CD8-positive, alpha-beta memory T cell (primary cell): ENCODE measurements at regions of chr11 and their contacts with region 1.

Region 1: GRCh38 chr11:64152841-64153691 is 12.8 kb downstream of the MACROD1 start:
- DNase-seq: peak; percentile 54 to 72 (median 62)
- H3K4me3 ChIP-seq: no peak overlapping the region
- H3K4me3 Mint-ChIP-seq: no peak overlapping the region
- H3K27ac ChIP-seq: no peak overlapping the region
- H3K27ac Mint-ChIP-seq: peak overlapping the region in 1 of 8 donors; percentile 51
- H3K4me1 ChIP-seq: no peaks in the 10 kb centered on the region
- H3K4me1 Mint-ChIP-seq: peaks cover 0 to 6% (median 2%) of the 10 kb centered on the region in 3 donors
- H3K27me3 ChIP-seq: no peaks in the 10 kb centered on the region
- H3K27me3 Mint-ChIP-seq: peaks cover 0 to 2% of the 10 kb centered on the region in 2 donors

Region 2: GRCh38 chr11:63768237-63769043 is 384.6 kb before region 1 on chr11 and contains the start of gene ZFTA:
- CTCF ChIA-PET with region 1: interaction called, 10 read pairs
- POLR2A ChIA-PET with region 1: no interaction called
- DNase-seq: peak; percentile 50 to 76 (median 63)
- H3K4me3 ChIP-seq: peak within 1 kb of the TSS; percentile 76
- H3K4me3 Mint-ChIP-seq: peak within 1 kb of the TSS; percentile 87 to 99 (median 95)
- H3K27ac ChIP-seq: peak within 1 kb of the TSS; percentile 64
- H3K27ac Mint-ChIP-seq: peak within 1 kb of the TSS in 7 of 8 donors; percentile 23 to 91 (median 83)
- H3K4me1 ChIP-seq: peaks cover 8% of the 10 kb centered on the region
- H3K4me1 Mint-ChIP-seq: peaks cover 8 to 17% (median 9%) of the 10 kb centered on the region in 3 donors
- H3K27me3 ChIP-seq: no peaks in the 10 kb centered on the region
- H3K27me3 Mint-ChIP-seq: peaks cover 4 to 9% of the 10 kb centered on the region in 2 donors
- total RNA-seq, gene ZFTA: 7.0 to 7.6 TPM

Region 3: GRCh38 chr11:64000026-64000739 is 152.9 kb before region 1 on chr11:
- CTCF ChIA-PET with region 1: interaction called, 64 read pairs
- POLR2A ChIA-PET with region 1: no interaction called
- DNase-seq: peak; percentile 67 to 78 (median 70)
- H3K4me3 ChIP-seq: no peak overlapping the region
- H3K4me3 Mint-ChIP-seq: peak overlapping the region in 5 of 7 donors; percentile 54 to 84 (median 60)
- H3K27ac ChIP-seq: no peak overlapping the region
- H3K27ac Mint-ChIP-seq: peak overlapping the region in 1 of 8 donors; percentile 33
- H3K4me1 ChIP-seq: peaks cover 7% of the 10 kb centered on the region
- H3K4me1 Mint-ChIP-seq: peaks cover 0 to 24% (median 4%) of the 10 kb centered on the region in 3 donors
- H3K27me3 ChIP-seq: no peaks in the 10 kb centered on the region
- H3K27me3 Mint-ChIP-seq: no peaks in the 10 kb centered on the region

Region 4: GRCh38 chr11:64122411-64123410 is 30.4 kb before region 1 on chr11:
- CTCF ChIA-PET with region 1: no interaction called
- POLR2A ChIA-PET with region 1: no interaction called
- DNase-seq: no peak
- H3K4me3 ChIP-seq: no peak overlapping the region
- H3K4me3 Mint-ChIP-seq: no peak overlapping the region
- H3K27ac ChIP-seq: no peak overlapping the region
- H3K27ac Mint-ChIP-seq: peak overlapping the region in 1 of 8 donors; percentile 74
- H3K4me1 ChIP-seq: no peaks in the 10 kb centered on the region
- H3K4me1 Mint-ChIP-seq: no peaks in the 10 kb centered on the region
- H3K27me3 ChIP-seq: no peaks in the 10 kb centered on the region
- H3K27me3 Mint-ChIP-seq: no peaks in the 10 kb centered on the region